ENCODE measurements at regions of chr4 and their contacts with region 1.

Region 1: GRCh38 chr4:72302981-72303704 is 265.9 kb downstream of the ADAMTS3 start:
- H3K4me3 Mint-ChIP-seq: no peak overlapping the region
- H3K27ac Mint-ChIP-seq: no peak overlapping the region
- H3K4me1 Mint-ChIP-seq: no peaks in the 10 kb centered on the region
- H3K27me3 Mint-ChIP-seq: no peaks in the 10 kb centered on the region

Region 2: GRCh38 chr4:70601422-70602039 is 1701.6 kb before region 1 on chr4:
- intact Hi-C with region 1: loop called (anchors 1 kb)
- H3K4me3 Mint-ChIP-seq: no peak overlapping the region
- H3K27ac Mint-ChIP-seq: no peak overlapping the region
- H3K4me1 Mint-ChIP-seq: no peaks in the 10 kb centered on the region
- H3K27me3 Mint-ChIP-seq: no peaks in the 10 kb centered on the region

Region 3: GRCh38 chr4:71270901-71271300 is 1032.2 kb before region 1 on chr4:
- intact Hi-C with region 1: loop called (anchors 5 kb)
- H3K4me3 Mint-ChIP-seq: no peak overlapping the region
- H3K27ac Mint-ChIP-seq: no peak overlapping the region
- H3K4me1 Mint-ChIP-seq: no peaks in the 10 kb centered on the region
- H3K27me3 Mint-ChIP-seq: peaks cover 17% of the 10 kb centered on the region

Region 4: GRCh38 chr4:71732706-71733105 is 570.4 kb before region 1 on chr4:
- intact Hi-C with region 1: loop called (anchors 5 kb)
- H3K4me3 Mint-ChIP-seq: no peak overlapping the region
- H3K27ac Mint-ChIP-seq: no peak overlapping the region
- H3K4me1 Mint-ChIP-seq: no peaks in the 10 kb centered on the region
- H3K27me3 Mint-ChIP-seq: peaks cover 1% of the 10 kb centered on the region